Activated B cell treated with CpG ODN at 0.5 μM for 24 hours (primary cell): ENCODE measurements at regions of chr9 and their contacts with region 1.

Region 1: DNA sequence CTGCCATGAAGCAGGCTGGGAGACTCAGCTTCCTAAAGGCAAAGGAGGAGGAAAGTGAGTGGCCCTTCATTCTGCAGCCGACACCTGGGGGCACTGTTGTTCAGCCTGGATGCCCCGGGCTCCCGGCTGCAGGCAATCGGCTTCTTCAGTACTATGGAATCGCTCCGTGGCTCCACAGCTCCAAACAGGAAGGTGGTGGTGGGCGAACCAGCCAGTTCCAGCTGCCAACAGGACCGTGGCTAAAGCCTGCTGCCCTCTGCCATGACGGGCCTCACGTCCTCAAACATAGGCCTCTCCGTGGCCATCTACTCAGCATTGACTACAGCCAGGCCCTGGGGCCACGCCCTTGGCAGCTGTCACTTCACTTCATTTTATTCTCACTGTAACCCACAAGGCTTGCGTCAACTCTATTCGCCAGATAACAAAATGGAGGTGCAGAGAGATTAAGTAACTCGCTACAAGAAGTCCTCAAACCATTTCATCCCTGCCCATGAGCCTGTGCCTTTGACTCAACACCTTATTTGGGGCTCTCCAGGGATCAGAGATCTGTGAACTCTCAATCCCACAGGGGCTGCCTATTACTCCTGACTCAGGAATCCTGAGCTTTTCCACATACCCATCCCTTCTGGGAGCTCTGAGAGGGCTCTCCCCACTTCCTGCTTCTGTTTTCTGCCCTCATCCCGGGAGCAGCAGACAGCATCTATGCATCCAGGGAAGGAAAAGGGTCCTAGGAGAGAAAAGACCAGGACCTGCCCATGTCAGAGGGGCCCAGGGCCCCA is 38.0 kb downstream of the PAX5 start:
- DNase-seq: peak; percentile 56
- ATAC-seq: peak; percentile 29
- H3K4me3 Mint-ChIP-seq: peak overlapping the region; percentile 47
- H3K27ac Mint-ChIP-seq: peak overlapping the region; percentile 97
- H3K4me1 Mint-ChIP-seq: peaks cover 96% of the 10 kb centered on the region
- H3K27me3 Mint-ChIP-seq: no peaks in the 10 kb centered on the region
- CTCF ChIP-seq: no peak

Region 2: DNA sequence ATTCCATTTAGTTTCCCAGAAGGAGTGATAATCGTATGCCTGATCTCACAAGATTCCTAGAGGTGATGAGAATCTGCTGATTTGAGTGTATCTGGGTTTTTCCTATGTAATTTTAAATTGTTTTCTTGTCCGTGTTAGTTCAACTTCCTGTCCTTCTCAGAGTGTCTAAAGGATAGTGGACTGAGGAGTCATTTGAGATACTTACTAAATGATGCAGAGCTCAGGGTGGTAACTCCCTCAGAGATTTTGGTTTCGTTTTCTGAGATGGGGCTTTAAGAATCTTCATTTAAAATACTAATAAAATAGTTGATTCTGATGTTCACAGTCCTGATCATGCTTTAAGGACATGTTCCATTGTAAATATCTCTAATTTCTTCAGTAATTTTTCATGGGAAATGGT is 393.1 kb before region 1 on chr9:
- CTCF ChIA-PET with region 1: no interaction called
- POLR2A ChIA-PET with region 1: no interaction called
- intact Hi-C with region 1: no loop called
- DNase-seq: no peak
- ATAC-seq: no peak
- H3K4me3 Mint-ChIP-seq: peak overlapping the region; percentile 11
- H3K27ac Mint-ChIP-seq: no peak overlapping the region
- H3K4me1 Mint-ChIP-seq: peaks cover 5% of the 10 kb centered on the region
- H3K27me3 Mint-ChIP-seq: no peaks in the 10 kb centered on the region
- CTCF ChIP-seq: no peak

Region 3: GRCh38 chr9:36873247-36873875 is 122.8 kb before region 1 on chr9:
- CTCF ChIA-PET with region 1: interaction called, 16 read pairs
- POLR2A ChIA-PET with region 1: interaction called, 6 read pairs
- intact Hi-C with region 1: loop called (anchors 1 kb)
- DNase-seq: peak; percentile 52
- ATAC-seq: peak; percentile 77
- H3K4me3 Mint-ChIP-seq: no peak overlapping the region
- H3K27ac Mint-ChIP-seq: peak overlapping the region; percentile 87
- H3K4me1 Mint-ChIP-seq: peaks cover 63% of the 10 kb centered on the region
- H3K27me3 Mint-ChIP-seq: no peaks in the 10 kb centered on the region
- CTCF ChIP-seq: no peak

Region 4: GRCh38 chr9:37053684-37054362 is 57.7 kb after region 1 on chr9:
- CTCF ChIA-PET with region 1: no interaction called
- POLR2A ChIA-PET with region 1: no interaction called
- intact Hi-C with region 1: no loop called
- DNase-seq: no peak
- ATAC-seq: no peak
- H3K4me3 Mint-ChIP-seq: no peak overlapping the region
- H3K27ac Mint-ChIP-seq: no peak overlapping the region
- H3K4me1 Mint-ChIP-seq: peaks cover 19% of the 10 kb centered on the region
- H3K27me3 Mint-ChIP-seq: no peaks in the 10 kb centered on the region
- CTCF ChIP-seq: no peak

Region 5: DNA sequence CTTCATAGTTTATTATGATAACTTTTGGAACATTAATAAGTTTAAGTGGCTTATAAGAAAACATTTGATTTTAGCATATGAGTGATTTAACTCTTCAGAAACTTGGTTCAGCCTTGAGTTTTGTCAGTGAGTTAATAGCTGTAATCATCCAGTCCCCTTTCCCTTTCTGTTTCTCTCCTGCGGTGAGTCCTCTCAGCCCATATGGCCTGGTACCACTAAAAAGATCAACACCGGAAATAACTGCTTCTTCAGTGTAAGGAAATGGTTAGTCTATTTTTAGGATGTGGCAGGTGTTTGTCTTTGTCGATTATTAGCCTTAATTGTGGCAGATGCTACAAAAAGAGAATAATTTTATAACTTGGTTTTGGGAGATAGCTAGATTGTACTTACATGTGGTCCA is 306.2 kb after region 1 on chr9:
- CTCF ChIA-PET with region 1: interaction called, 5 read pairs
- POLR2A ChIA-PET with region 1: interaction called, 6 read pairs
- intact Hi-C with region 1: loop called (anchors 2 kb)
- DNase-seq: no peak
- ATAC-seq: peak; percentile 84
- H3K4me3 Mint-ChIP-seq: peak overlapping the region; percentile 73
- H3K27ac Mint-ChIP-seq: peak overlapping the region; percentile 96
- H3K4me1 Mint-ChIP-seq: peaks cover 83% of the 10 kb centered on the region
- H3K27me3 Mint-ChIP-seq: no peaks in the 10 kb centered on the region
- CTCF ChIP-seq: no peak

Region 6: DNA sequence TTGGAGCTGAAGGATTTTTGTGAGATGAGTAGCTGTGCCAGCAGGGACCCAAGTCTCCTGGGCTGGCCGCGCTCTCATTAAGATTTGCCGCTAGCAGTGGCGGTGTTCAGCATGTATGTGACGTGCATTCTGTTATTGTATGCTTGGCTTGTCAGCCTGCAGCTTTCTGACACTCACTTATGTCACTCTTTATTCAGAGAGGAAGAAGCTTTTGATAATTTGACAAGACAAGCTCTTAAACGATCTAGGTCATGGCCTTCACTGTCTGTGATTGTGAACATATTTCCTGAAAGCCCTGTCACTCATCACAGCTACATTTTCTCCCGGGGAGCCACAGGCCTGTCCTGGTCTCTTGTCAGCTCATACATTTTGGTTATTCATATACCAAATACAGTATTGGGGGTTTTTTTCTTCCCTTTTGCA is 328.2 kb after region 1 on chr9:
- CTCF ChIA-PET with region 1: interaction called, 19 read pairs
- POLR2A ChIA-PET with region 1: interaction called, 9 read pairs
- intact Hi-C with region 1: loop called (anchors 1 kb)
- DNase-seq: peak; percentile 42
- ATAC-seq: peak; percentile 86
- H3K4me3 Mint-ChIP-seq: peak overlapping the region; percentile 59
- H3K27ac Mint-ChIP-seq: peak overlapping the region; percentile 99
- H3K4me1 Mint-ChIP-seq: peaks cover 69% of the 10 kb centered on the region
- H3K27me3 Mint-ChIP-seq: no peaks in the 10 kb centered on the region
- CTCF ChIP-seq: no peak

Region 7: DNA sequence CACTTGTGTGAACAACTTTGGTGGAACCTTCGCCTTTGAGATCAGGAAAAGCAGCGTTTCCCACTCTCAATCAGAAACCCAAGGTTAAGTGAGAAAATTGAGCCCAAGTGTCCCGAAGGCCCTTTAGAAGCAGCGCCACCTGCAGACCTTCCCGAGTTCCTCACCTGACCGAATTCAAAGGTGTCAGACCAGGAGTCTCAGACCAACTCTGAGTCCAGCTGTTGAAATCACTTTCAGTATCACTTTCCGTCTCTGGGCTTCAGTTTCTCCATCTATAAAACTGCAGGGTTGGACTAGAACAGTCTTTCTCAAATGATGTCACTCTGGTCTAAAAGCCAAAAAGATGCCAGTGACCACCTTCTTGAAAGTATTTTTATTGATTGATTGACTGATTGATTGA is 394.6 kb after region 1 on chr9:
- CTCF ChIA-PET with region 1: no interaction called
- POLR2A ChIA-PET with region 1: interaction called, 12 read pairs
- intact Hi-C with region 1: no loop called
- DNase-seq: no peak
- ATAC-seq: peak; percentile 54
- H3K4me3 Mint-ChIP-seq: peak overlapping the region; percentile 4
- H3K27ac Mint-ChIP-seq: peak overlapping the region; percentile 86
- H3K4me1 Mint-ChIP-seq: peaks cover 66% of the 10 kb centered on the region
- H3K27me3 Mint-ChIP-seq: no peaks in the 10 kb centered on the region
- CTCF ChIP-seq: no peak

Region 8: DNA sequence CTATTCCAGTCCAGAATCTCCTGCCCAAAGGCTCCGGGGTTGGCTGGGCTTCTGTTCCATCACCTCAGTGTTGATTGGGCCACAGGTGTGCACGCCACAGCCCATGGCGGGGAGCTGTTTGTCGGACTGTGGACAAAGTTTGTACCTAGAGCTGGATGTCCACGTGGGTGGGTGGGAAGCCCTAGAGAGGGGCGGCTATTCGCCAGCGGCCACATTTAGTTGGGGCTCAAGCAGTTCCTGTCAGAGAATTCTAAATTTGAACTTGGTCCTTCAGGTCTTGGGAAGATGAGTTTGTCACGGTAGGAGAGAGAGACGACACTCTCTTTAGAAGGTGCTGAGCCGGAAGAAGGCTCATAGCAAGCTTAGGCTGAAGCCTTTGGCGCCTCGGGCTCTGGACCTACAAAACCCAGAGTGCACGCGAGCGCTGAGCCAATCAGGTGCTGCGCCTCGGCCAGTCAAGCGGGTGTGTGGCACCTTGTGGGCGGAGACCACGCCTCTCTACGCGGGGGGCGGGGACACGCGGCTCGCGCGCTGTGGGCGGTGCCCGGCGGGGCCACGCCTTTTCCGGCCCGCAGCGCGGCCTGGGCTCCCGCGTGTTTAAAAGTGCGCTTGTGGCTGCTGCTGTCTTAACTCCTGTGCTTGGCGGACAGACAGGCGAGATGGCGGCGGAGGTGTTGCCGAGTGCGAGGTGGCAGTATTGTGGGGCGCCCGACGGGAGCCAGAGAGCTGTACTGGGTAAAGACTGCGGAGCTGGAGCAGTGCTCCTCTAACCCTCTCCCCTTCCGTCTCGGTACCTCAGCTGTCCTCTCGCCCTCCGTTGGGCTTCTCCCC is 489.5 kb after region 1 on chr9 and contains the start of gene POLR1E:
- CTCF ChIA-PET with region 1: no interaction called
- POLR2A ChIA-PET with region 1: no interaction called
- intact Hi-C with region 1: no loop called
- DNase-seq: peak; percentile 99
- ATAC-seq: peak; percentile 98
- H3K4me3 Mint-ChIP-seq: peak within 1 kb of the TSS; percentile 92
- H3K27ac Mint-ChIP-seq: peak within 1 kb of the TSS; percentile 85
- H3K4me1 Mint-ChIP-seq: peaks cover 31% of the 10 kb centered on the region
- H3K27me3 Mint-ChIP-seq: no peaks in the 10 kb centered on the region
- CTCF ChIP-seq: no peak
- total RNA-seq, gene POLR1E: 45.4 and 46.3 TPM in 2 replicates